ENCODE measurements at regions of chr17 and their contacts with region 1.

Region 1: DNA sequence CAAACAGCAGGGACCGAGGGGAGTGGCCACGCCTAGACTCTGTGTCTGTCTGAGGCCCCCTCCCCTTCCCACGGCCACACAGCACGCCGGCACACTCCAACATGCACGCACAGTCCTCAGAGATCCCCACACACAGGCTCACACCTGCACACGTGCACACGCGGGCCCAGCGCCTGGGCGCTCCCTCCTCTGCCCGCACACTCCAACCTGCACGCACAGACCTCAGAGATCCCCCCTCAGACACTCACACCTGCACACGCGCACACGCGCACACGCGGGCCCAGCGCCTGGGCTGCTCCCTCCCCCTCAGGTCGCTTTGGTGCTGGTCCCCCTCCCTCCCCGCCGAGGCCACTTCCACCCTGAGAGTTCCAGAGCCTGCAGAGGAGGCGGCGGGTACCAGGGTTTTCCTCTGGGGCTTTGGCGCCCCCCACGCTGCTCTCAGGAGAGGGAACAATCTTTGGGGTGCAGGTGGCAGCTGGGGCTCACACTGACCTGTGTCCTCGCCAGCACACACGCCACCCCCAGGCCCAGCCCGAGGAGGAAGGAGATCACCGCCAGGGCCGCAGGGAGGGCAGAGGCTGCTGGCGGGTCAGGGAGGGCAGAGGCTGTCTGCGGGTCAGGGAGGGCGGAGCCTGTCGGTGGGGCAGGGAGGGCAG is 1.6 kb downstream of the CD7 start:
- DNase-seq: peak; percentile 66
- H3K4me3 Mint-ChIP-seq: no peak overlapping the region
- H3K27ac Mint-ChIP-seq: no peak overlapping the region
- H3K4me1 Mint-ChIP-seq: peaks cover 18% of the 10 kb centered on the region
- H3K27me3 Mint-ChIP-seq: no peaks in the 10 kb centered on the region

Region 2: DNA sequence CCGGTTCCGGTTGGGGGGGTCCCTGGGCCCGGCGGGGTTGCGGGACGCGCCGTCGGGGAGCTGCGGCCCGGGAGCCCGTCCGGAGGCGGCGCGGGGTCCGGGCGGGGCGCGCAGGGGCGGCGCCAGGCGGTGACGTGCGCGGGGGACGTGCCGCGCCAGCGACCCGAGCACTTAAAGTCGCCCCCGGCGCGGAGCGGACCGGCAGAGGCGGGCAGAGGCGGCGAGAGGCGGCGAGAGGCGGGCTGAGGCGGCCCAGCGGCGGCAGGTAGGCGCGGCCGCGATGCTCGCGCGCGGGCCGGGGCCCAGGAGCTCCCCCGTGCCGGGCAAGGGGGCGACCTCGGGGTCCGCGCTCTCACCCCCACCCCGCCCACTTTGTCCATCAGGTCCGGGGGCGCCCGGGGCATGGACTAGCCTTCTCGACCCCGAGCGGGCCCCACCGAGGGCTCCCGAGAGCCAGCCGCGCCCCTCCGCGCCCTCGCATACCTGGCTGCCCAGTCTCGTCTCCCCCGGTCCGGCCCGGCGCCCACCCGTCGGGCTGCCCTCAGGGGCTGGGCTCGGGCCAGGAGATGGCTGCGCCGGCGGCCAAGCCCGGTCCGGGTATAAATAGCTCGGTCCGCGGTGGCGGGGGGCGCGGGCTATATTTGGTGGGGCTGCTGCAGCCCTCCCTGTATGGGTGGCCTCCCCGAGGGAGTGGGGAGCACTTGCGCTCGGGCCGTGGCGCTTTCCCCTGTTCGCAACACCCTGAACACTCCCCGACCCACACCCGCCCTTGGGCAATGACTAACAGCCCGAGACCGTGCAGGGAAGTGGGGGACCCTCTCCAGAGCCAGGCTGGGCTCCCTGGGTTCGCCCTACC is 86.8 kb before region 1 on chr17 and contains the start of gene SLC16A3:
- CTCF ChIA-PET with region 1: no interaction called
- intact Hi-C with region 1: no loop called
- DNase-seq: peak; percentile 39
- H3K4me3 Mint-ChIP-seq: peak within 1 kb of the TSS; percentile 82
- H3K27ac Mint-ChIP-seq: peak within 1 kb of the TSS; percentile 50
- H3K4me1 Mint-ChIP-seq: peaks cover 12% of the 10 kb centered on the region
- H3K27me3 Mint-ChIP-seq: peaks cover 3% of the 10 kb centered on the region
- total RNA-seq, gene SLC16A3: 15.2 to 18.3 TPM

Region 3: DNA sequence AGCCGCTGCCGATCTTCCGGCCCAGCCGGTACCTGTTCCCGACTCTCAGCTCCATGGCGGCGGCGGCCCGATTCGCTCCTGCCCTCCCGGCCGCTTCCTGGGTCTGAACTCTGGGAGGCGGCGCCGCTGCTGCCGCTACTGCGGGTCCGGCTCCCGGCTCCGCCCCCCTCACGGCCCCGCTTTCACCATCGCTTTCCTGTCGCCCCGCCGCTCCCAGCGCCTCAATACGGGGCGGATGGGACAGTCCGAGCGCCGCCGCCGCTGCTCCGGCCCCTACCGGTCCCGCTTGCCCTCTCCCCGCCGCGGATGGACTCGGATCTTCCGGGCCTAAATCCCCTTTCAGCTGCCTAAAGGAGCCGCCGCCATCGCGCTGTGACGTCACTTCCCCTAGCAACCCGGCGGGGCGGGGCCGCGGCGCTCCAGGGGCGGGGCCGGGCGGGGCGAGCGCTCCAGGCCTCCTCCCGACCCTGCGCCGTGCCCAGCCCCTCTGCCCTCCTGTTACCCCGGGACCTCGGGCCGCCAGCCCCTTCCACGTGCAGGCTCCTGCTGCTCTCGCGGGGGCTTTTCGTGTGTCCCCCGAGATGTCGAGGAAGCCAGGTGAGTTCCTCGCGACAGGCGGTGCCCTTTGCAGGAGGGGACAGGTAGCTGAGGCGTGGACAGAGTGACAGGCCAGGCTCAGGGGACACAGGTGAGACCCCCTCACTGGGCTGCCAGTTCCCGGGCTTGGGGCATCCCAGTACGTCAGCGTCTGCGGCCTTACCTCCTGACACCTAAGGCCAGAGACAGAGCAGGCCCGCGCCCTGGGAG is 42.3 kb before region 1 on chr17 and contains the start of gene CSNK1D:
- CTCF ChIA-PET with region 1: no interaction called
- intact Hi-C with region 1: loop called (anchors 2 kb)
- DNase-seq: peak; percentile 93
- H3K4me3 Mint-ChIP-seq: peak within 1 kb of the TSS; percentile 81
- H3K27ac Mint-ChIP-seq: peak within 1 kb of the TSS; percentile 94
- H3K4me1 Mint-ChIP-seq: peaks cover 39% of the 10 kb centered on the region
- H3K27me3 Mint-ChIP-seq: no peaks in the 10 kb centered on the region
- total RNA-seq, gene CSNK1D: 99.8 to 100 TPM

Region 4: DNA sequence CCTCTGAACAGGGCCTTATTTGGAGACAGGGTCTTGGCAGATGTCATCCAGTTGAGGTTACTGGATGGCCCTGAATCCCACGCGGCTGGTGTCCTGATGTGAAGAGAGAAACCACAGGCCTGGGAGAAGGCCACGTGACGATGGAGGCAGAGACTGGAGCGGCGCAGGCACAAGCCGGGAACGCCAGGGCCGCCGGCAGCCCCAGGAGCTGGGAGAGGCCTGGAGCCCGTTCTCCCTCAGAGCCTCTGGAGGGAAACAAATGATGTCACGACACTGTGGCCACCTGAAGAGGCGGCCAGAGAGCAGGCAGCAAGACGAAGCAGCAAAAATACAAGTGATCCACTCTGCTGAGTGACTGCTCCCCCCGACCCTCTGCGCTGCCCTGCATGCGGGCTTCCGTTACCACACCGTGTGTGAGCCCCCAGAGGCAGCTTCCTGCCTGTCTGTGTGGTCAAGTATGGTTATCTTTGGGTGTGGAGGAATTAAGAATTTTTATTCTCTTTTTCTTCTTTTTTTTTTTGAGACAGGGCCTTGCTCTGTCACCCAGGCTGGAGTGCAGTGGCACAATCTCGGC is 10.0 kb before region 1 on chr17:
- CTCF ChIA-PET with region 1: interaction called, 60 read pairs
- intact Hi-C with region 1: loop called (anchors 1 kb)
- DNase-seq: no peak
- H3K4me3 Mint-ChIP-seq: peak overlapping the region; percentile 8
- H3K27ac Mint-ChIP-seq: peak overlapping the region; percentile 97
- H3K4me1 Mint-ChIP-seq: peaks cover 60% of the 10 kb centered on the region
- H3K27me3 Mint-ChIP-seq: no peaks in the 10 kb centered on the region

Region 5: GRCh38 chr17:82350182-82351030 is 34.6 kb after region 1 on chr17:
- CTCF ChIA-PET with region 1: no interaction called
- intact Hi-C with region 1: no loop called
- DNase-seq: peak; percentile 81
- H3K4me3 Mint-ChIP-seq: no peak overlapping the region
- H3K27ac Mint-ChIP-seq: no peak overlapping the region
- H3K4me1 Mint-ChIP-seq: peaks cover 7% of the 10 kb centered on the region
- H3K27me3 Mint-ChIP-seq: no peaks in the 10 kb centered on the region

Measured in activated naive CD4-positive, alpha-beta T cell treated with anti-CD3 and anti-CD28 coated beads for 36 hours (primary cell).